ENCODE measurements at regions of chr9 and their contacts with region 1.

Region 1: DNA sequence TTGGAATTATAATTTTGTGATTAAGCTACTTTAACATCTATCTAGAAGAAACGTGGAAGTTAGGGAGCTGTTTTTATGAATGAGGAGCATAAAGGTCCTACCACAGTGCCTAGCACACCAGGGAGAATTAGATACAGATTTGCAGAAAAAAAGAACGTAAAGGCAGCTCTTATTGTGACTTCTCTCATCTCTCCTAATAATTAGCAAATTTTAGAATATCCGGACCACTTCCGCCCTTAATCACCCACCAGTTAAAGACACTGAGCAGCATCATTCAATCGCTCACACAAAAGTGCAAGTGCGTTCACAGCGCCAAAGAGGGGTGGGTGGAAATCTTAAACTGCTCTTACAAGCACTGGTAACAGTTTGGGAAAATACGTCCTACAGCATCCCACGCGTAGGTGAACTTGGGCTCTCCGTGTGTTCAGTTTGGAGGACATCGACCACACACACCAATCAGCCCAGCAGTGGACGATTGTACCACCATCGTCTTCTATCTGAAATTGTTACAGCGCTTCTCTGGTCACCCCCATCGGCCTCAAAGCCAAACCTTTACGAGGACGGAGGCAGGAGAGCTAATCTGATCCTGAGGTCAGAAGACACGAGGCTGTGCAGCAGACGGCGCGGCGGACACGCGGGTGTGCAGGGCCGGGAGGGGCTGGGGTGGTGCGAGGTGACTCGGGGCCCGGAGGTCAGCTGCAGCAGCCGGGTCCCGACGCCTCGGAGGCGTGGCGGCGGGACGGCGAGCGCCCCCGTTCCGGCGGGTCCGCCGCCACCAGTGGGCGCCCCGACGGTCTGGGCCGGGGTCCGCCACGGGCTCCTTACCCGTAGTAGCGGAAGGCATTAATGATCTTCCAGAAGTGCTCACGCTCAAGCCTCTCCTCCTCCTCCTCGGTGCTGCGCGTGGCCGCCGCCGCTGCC is 646 bp downstream of the CARNMT1 start:
- DNase-seq: peak; percentile 53
- H3K4me3 Mint-ChIP-seq: peak overlapping the region; percentile 99
- H3K27ac Mint-ChIP-seq: peak overlapping the region; percentile 96
- H3K4me1 Mint-ChIP-seq: peaks cover 32% of the 10 kb centered on the region
- H3K27me3 Mint-ChIP-seq: no peaks in the 10 kb centered on the region

Region 2: DNA sequence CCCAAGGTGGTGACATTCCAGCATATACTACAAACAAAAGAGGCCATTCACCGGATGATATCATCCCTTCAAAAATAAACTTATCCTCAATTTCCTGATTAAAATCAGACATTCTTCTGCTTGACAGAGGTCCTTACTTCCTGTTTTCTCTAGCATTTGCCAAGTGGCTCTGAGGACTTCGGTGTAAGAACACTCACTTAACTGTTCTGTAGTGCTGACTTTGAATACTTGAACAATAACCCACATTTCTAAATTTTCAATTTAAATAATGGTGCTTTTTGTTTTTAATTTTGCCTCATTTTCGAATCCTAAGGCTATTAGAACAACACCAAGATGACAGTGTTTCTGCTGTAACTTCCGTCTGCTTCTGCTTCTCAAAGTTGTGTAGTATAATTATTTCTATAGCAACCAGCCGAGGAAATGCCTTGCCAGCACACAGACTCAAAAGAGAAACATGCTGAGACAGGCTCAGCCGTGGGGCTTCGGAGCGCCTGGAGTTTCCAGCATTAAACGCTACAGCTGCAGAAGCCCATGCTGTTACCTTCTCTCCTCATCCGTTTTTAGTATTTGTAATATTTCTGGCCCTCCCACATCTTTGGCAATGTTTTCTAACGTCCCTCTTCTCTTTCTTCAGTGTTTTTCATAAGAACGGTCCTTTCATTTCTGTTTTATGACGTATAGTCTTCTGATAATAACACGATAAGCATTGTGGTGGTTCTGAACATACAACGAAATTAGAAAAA is 1895.2 kb before region 1 on chr9:
- CTCF ChIA-PET with region 1: no interaction called
- intact Hi-C with region 1: loop called (anchors 5 kb)
- DNase-seq: peak; percentile 76
- H3K4me3 Mint-ChIP-seq: peak overlapping the region; percentile 79
- H3K27ac Mint-ChIP-seq: peak overlapping the region; percentile 86
- H3K4me1 Mint-ChIP-seq: peaks cover 25% of the 10 kb centered on the region
- H3K27me3 Mint-ChIP-seq: no peaks in the 10 kb centered on the region

Region 3: DNA sequence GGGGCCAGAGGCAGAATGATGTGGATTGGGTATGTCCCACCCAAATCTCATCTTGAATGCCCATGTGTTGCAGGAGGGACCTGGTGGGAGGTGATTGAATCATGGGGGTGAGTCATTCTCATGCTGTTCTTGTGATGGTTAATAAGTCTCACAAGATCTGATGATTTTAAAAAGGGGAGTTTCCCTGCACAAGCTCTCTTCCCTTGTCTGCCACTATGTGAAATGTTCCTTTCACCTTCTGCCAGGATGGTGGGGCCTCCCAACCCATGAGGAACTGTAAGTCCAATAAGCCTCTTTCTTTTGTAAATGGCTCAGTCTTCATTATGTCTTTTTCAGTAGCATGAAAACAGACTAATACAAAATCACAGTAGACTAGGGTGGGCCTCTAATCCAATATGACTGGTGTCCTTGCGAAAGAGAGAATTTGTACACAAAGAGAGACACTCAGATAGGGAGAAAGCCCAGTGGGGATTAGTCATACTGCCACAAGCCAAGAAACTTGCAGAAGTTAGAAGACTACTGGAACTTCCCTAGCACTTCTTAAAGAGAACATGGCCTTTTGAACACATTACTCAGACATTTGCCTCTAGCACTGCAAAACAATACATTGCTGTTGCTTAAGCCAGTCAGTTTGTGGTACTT is 1807.3 kb before region 1 on chr9:
- CTCF ChIA-PET with region 1: no interaction called
- intact Hi-C with region 1: loop called (anchors 5 kb)
- DNase-seq: peak; percentile 61
- H3K4me3 Mint-ChIP-seq: no peak overlapping the region
- H3K27ac Mint-ChIP-seq: peak overlapping the region; percentile 91
- H3K4me1 Mint-ChIP-seq: peaks cover 27% of the 10 kb centered on the region
- H3K27me3 Mint-ChIP-seq: peaks cover 44% of the 10 kb centered on the region

Region 4: GRCh38 chr9:74952281-74953151 is 74.9 kb before region 1 on chr9 and contains the start of gene C9orf40:
- CTCF ChIA-PET with region 1: interaction called, 11 read pairs
- intact Hi-C with region 1: loop called (anchors 1 kb)
- DNase-seq: peak; percentile 92
- H3K4me3 Mint-ChIP-seq: peak within 1 kb of the TSS; percentile 95
- H3K27ac Mint-ChIP-seq: peak within 1 kb of the TSS; percentile 89
- H3K4me1 Mint-ChIP-seq: peaks cover 26% of the 10 kb centered on the region
- H3K27me3 Mint-ChIP-seq: no peaks in the 10 kb centered on the region
- total RNA-seq, gene C9orf40: 23.1 to 23.9 TPM

Region 5: GRCh38 chr9:75071530-75072124 is 44.2 kb after region 1 on chr9:
- CTCF ChIA-PET with region 1: interaction called, 6 read pairs
- intact Hi-C with region 1: loop called (anchors 1 kb)
- DNase-seq: peak; percentile 90
- H3K4me3 Mint-ChIP-seq: peak overlapping the region; percentile 0
- H3K27ac Mint-ChIP-seq: peak overlapping the region; percentile 79
- H3K4me1 Mint-ChIP-seq: peaks cover 41% of the 10 kb centered on the region
- H3K27me3 Mint-ChIP-seq: no peaks in the 10 kb centered on the region

Region 6: DNA sequence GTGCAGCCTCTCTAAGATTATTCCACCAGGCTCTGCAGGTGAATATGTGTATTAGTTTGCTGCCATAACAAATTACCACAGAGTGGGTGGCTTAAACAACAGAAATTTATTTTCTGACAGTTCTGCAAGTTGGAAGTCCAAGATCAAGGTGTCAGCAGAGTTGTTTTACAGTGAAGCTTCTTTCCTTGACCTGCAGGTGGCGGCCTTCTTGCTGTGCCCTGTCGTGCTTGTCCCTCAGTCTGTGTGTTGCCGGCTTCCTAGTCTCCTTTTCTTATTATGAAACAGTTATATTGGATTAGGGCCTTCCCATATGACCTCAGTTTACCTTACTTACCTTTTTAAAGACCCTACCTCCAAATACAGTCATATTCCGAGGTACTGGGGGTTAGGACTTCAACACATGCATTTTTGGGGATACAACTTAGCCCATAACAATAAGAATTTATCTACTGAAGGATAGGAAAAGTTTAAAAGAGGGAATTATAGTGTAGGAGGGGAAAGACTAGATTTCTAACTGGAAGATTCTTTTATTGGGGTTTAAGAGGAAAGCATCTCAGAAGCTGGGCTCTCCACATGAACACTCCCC is 158.2 kb after region 1 on chr9:
- CTCF ChIA-PET with region 1: no interaction called
- intact Hi-C with region 1: loop called (anchors 10 kb)
- DNase-seq: peak; percentile 72
- H3K4me3 Mint-ChIP-seq: no peak overlapping the region
- H3K27ac Mint-ChIP-seq: no peak overlapping the region
- H3K4me1 Mint-ChIP-seq: peaks cover 16% of the 10 kb centered on the region
- H3K27me3 Mint-ChIP-seq: no peaks in the 10 kb centered on the region

Region 7: DNA sequence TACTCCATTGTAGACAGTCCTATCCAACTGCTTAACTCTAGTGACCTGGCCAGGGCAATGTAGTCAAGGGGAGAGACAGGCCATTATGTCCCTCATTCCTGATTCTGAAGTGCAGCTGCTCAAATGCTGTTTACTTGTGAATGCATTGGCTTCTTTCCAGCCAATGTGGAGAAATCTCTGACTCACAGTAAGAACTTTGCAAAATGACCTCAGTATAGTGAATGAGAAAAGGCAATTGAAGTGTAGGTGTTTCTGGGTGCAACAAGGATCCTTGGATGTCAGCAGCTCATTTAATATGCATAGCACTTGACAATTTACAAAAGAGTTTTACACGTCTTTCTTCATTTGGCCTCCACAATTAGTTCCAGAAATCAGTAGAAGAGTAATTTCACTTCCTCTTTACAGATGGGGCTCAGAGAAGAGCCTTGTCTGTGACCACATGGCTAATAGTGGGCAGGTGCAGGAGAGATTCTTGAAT is 428.0 kb after region 1 on chr9:
- CTCF ChIA-PET with region 1: no interaction called
- intact Hi-C with region 1: no loop called
- DNase-seq: no peak
- H3K4me3 Mint-ChIP-seq: no peak overlapping the region
- H3K27ac Mint-ChIP-seq: no peak overlapping the region
- H3K4me1 Mint-ChIP-seq: no peaks in the 10 kb centered on the region
- H3K27me3 Mint-ChIP-seq: peaks cover 7% of the 10 kb centered on the region

Region 8: GRCh38 chr9:76393963-76394679 is 1366.7 kb after region 1 on chr9 and contains the start of gene RFK:
- CTCF ChIA-PET with region 1: no interaction called
- intact Hi-C with region 1: loop called (anchors 10 kb)
- DNase-seq: peak; percentile 94
- H3K4me3 Mint-ChIP-seq: peak within 1 kb of the TSS; percentile 96
- H3K27ac Mint-ChIP-seq: peak within 1 kb of the TSS; percentile 92
- H3K4me1 Mint-ChIP-seq: peaks cover 25% of the 10 kb centered on the region
- H3K27me3 Mint-ChIP-seq: no peaks in the 10 kb centered on the region
- total RNA-seq, gene RFK: 4.2 to 5.2 TPM